Activated naive CD4-positive, alpha-beta T cell treated with anti-CD3 and anti-CD28 coated beads for 36 hours (primary cell): ENCODE measurements at regions of chr6 and their contacts with region 1.

Region 1: DNA sequence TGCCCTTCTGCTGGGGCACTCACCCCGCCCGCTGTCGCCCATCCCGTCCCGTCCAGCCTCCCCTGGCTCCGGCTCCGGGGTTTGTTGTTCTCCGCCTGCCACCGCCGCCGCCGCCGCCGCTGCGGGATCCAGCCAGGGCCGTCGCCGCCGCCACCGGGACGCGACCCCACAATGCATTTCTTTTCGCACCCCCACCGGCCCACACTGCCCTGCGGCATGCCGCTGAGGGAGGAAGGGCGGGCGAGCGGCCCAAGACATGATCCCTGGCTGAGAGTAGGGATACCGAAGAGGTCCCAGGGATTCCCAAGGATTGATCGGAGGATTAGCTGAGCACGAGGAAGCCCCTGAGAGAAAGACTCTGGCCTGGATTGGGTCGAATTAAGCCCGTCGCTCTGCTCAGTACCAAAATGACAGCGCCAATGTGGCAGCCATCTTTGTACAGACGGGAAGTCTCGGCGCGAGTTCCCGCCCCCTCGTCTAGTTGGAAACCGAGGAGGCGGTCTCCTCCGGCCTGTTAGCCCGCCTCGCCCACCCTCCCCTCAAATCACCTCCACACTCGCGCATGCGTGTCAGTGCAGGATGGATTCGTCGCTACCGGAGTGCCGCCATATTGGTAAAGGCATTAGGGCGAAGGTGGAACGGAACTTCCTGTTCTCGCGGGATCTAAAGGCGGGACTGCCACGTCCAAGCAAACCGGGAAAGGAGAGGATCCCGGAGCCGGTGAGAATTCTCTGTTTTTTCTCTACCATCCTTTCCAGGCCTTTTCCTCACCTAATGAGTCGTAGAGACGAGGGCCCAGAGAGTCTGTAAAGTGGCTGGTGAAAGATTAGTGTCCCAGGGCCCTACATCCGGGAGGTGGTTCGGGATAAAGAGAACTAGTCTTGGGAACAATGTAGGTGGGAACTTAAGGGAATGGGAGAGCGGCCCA is at the starts of genes RXRB and SLC39A7:
- DNase-seq: peak; percentile 100
- H3K4me3 Mint-ChIP-seq: peak within 1 kb of the TSS; percentile 98
- H3K27ac Mint-ChIP-seq: peak within 1 kb of the TSS; percentile 97
- H3K4me1 Mint-ChIP-seq: peaks cover 60% of the 10 kb centered on the region
- H3K27me3 Mint-ChIP-seq: no peaks in the 10 kb centered on the region
- total RNA-seq, gene RXRB: 50.4 to 50.6 TPM
- total RNA-seq, gene SLC39A7: 35.9 to 39.5 TPM

Region 2: GRCh38 chr6:32843979-32844838 is 356.3 kb before region 1 on chr6 and contains the start of gene PSMB8:
- CTCF ChIA-PET with region 1: no interaction called
- intact Hi-C with region 1: loop called (anchors 5 kb)
- DNase-seq: peak; percentile 100
- H3K4me3 Mint-ChIP-seq: peak within 1 kb of the TSS; percentile 98
- H3K27ac Mint-ChIP-seq: peak within 1 kb of the TSS; percentile 99
- H3K4me1 Mint-ChIP-seq: peaks cover 71% of the 10 kb centered on the region
- H3K27me3 Mint-ChIP-seq: no peaks in the 10 kb centered on the region
- total RNA-seq, gene PSMB8: 286 to 308 TPM

Region 3: GRCh38 chr6:33241968-33242367 is 41.5 kb after region 1 on chr6:
- CTCF ChIA-PET with region 1: interaction called, 3 read pairs
- intact Hi-C with region 1: loop called (anchors 1 kb)
- DNase-seq: no peak
- H3K4me3 Mint-ChIP-seq: no peak overlapping the region
- H3K27ac Mint-ChIP-seq: no peak overlapping the region
- H3K4me1 Mint-ChIP-seq: peaks cover 14% of the 10 kb centered on the region
- H3K27me3 Mint-ChIP-seq: peaks cover 3% of the 10 kb centered on the region

Region 4: DNA sequence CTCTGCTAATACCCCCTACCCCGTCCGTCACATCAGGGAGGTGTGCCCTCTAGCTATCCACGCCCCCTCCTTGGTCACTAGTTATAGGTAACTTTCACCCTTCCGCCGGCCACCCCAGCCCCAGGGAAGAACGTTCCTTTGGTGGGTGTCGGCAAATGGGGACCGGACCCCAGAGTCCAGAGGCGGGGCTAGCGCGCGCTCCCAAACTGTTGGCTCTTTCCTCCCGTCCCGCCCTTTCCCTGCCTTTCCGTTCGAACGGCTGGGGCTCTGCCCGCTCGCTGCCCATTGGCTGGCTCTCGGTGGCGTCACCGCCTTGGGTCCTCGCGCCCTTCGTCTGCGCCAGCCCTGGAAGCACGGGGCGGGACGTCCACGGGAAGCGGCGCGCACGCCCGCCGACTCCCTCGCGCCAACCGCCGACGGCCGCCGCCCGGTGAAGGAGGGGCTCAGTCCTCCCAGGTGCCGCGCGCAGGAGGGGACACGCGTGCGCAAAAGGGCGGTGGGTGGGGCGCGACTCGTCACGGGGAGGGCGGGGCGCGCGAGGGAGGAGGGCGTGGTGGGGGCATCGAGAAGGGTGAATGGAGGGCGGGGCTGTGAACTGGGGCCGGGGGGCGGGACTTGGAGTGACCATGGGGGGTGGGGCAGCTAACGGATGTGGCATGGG is 209.7 kb after region 1 on chr6:
- CTCF ChIA-PET with region 1: no interaction called
- intact Hi-C with region 1: loop called (anchors 2 kb)
- DNase-seq: peak; percentile 98
- H3K4me3 Mint-ChIP-seq: peak overlapping the region; percentile 87
- H3K27ac Mint-ChIP-seq: peak overlapping the region; percentile 93
- H3K4me1 Mint-ChIP-seq: peaks cover 39% of the 10 kb centered on the region
- H3K27me3 Mint-ChIP-seq: no peaks in the 10 kb centered on the region